Panc1 (cell line): ENCODE measurements at regions of chrX and their contacts with region 1.

Region 1: DNA sequence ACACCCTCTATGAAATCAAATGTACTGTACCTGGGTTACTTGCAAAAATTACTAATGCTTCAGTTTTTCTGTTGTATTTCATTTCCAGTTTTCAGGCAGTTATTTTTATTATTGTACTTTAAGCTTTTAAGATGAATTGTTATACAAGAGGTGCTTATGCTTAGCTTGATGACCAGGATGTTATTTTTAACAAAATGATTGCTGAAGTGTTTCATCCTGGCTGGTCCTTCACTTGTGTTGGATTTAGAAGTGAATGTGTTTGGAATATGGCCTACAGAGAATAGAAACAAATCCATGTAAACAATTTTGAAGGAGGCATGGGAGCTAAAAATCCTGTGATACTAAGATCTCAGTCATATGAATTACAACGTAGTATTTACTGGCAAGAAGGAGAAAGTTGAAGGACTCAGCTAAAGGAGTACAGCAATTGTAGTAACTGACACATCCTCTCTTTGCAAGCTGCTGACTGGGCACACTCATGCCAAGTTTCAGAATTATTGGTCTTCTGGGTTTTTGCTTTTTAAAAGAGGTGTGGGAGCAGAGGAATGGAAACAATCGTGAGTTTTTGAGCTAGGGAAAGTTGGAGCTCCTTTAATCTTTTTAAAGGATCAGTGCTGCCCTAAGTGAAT is 9.2 kb downstream of the UBE2A start:
- DNase-seq: no peak
- ATAC-seq: no peak
- H3K4me3 ChIP-seq: no peak overlapping the region
- H3K27ac ChIP-seq: no peak overlapping the region
- H3K4me1 ChIP-seq: no peaks in the 10 kb centered on the region
- H3K27me3 ChIP-seq: no peaks in the 10 kb centered on the region
- CTCF ChIP-seq: no peak

Region 2: GRCh38 chrX:119359618-119360382 is 223.7 kb before region 1 on chrX:
- CTCF ChIA-PET with region 1: no interaction called
- POLR2A ChIA-PET with region 1: no interaction called
- in situ Hi-C with region 1: no loop called
- intact Hi-C with region 1: no loop called
- DNase-seq: no peak
- ATAC-seq: 0 out of 2 replicates have a peak, but pooled peaks have one; percentile 17
- H3K4me3 ChIP-seq: no peak overlapping the region
- H3K27ac ChIP-seq: no peak overlapping the region
- H3K4me1 ChIP-seq: no peaks in the 10 kb centered on the region
- H3K27me3 ChIP-seq: no peaks in the 10 kb centered on the region
- CTCF ChIP-seq: no peak

Region 3: GRCh38 chrX:119605464-119606279 is 22.1 kb after region 1 on chrX:
- CTCF ChIA-PET with region 1: no interaction called
- POLR2A ChIA-PET with region 1: interaction called, 16 read pairs
- in situ Hi-C with region 1: no loop called
- intact Hi-C with region 1: no loop called
- DNase-seq: no peak
- ATAC-seq: peak; percentile 71
- H3K4me3 ChIP-seq: peak overlapping the region; percentile 73 to 86
- H3K27ac ChIP-seq: peak overlapping the region; percentile 85
- H3K4me1 ChIP-seq: peaks cover 4% of the 10 kb centered on the region
- H3K27me3 ChIP-seq: no peaks in the 10 kb centered on the region
- CTCF ChIP-seq: no peak

Region 4: GRCh38 chrX:119954374-119954773 is 370.8 kb after region 1 on chrX:
- CTCF ChIA-PET with region 1: no interaction called
- POLR2A ChIA-PET with region 1: no interaction called
- in situ Hi-C with region 1: no loop called
- intact Hi-C with region 1: no loop called
- DNase-seq: no peak
- ATAC-seq: no peak
- H3K4me3 ChIP-seq: no peak overlapping the region
- H3K27ac ChIP-seq: no peak overlapping the region
- H3K4me1 ChIP-seq: no peaks in the 10 kb centered on the region
- H3K27me3 ChIP-seq: no peaks in the 10 kb centered on the region; the same call in 1 of the 2 replicates
- CTCF ChIP-seq: no peak